Activated CD4-positive, alpha-beta memory T cell treated with anti-CD3 and anti-CD28 coated beads for 36 hours (primary cell): ENCODE measurements at regions of chr1 and their contacts with region 1.

Region 1: DNA sequence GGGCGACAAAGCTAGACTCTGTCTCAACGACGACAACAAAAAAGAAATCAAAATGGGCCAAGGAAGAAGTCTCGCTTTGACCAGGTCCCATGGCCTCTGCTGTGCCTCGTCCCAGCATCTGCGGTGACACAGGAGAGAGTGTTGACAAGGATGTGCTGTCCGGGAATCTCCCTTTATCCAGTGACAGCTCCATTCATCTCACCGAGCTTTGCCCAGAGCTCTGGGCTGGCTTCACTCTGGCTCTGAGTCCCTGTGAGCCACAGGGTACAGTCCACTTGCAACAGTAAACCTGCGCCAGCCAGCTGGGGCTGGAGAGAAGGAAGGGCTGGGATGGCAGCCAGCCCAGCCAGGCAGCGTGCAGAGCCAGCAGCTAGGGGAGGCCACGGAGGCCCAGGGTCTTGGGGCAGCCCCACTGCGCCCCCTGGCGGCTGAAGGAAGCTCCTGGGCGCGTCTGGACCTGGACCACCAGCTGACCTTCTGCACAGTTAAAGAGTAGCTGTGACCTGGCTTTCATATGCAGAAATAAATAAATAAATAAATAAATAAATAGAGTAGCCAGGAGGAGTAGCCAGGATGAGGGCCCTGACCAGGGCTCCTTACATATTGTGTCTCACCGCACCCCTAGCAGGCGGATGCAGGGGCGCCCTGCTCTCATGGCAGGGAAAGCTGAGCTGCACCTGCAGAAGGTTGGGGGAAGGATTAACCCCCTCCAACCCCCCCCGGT is 29.7 kb downstream of the ENO1 start:
- DNase-seq: peak; percentile 84
- H3K4me3 Mint-ChIP-seq: no peak overlapping the region
- H3K27ac Mint-ChIP-seq: no peak overlapping the region
- H3K4me1 Mint-ChIP-seq: no peaks in the 10 kb centered on the region
- H3K27me3 Mint-ChIP-seq: no peaks in the 10 kb centered on the region

Region 2: DNA sequence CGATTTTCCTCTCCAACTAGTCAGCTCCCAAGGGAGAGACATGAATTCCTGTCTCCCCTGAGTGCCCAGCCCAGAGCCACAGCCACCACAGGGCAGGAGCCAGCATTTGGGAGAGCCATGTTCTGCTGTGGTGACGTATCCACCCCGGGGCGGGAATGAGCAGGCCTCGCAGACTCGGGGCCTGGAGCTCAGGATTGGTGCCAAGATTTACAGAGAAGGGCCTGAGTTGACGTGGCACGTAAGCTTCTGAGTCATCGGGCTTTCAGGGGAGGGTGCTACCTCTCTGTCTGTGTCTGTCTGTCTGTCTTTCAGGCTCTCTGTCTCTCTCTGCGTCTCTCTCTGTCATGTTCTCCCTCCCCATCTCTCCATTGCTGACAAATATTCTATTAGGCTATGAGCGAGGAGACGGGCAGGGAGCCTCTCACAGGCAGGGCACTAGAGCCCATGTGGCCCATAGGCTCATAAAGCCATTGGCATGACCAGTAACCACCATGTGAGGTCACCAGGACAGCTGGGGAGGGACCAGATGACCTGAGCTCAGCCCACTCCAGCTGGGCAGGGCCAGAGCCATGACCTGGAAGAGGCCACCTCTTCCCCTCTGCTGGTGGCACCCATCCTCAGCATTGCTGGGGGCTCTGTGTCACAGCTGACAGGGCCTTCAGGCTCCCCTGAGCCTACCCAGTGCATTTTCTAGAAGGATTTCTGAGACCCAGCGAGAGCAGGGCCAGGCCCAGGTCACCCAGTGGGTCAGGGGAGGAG is 1377.8 kb before region 1 on chr1:
- CTCF ChIA-PET with region 1: no interaction called
- POLR2A ChIA-PET with region 1: no interaction called
- intact Hi-C with region 1: no loop called
- DNase-seq: peak; percentile 44
- H3K4me3 Mint-ChIP-seq: no peak overlapping the region
- H3K27ac Mint-ChIP-seq: no peak overlapping the region
- H3K4me1 Mint-ChIP-seq: no peaks in the 10 kb centered on the region
- H3K27me3 Mint-ChIP-seq: peaks cover 1% of the 10 kb centered on the region

Region 3: DNA sequence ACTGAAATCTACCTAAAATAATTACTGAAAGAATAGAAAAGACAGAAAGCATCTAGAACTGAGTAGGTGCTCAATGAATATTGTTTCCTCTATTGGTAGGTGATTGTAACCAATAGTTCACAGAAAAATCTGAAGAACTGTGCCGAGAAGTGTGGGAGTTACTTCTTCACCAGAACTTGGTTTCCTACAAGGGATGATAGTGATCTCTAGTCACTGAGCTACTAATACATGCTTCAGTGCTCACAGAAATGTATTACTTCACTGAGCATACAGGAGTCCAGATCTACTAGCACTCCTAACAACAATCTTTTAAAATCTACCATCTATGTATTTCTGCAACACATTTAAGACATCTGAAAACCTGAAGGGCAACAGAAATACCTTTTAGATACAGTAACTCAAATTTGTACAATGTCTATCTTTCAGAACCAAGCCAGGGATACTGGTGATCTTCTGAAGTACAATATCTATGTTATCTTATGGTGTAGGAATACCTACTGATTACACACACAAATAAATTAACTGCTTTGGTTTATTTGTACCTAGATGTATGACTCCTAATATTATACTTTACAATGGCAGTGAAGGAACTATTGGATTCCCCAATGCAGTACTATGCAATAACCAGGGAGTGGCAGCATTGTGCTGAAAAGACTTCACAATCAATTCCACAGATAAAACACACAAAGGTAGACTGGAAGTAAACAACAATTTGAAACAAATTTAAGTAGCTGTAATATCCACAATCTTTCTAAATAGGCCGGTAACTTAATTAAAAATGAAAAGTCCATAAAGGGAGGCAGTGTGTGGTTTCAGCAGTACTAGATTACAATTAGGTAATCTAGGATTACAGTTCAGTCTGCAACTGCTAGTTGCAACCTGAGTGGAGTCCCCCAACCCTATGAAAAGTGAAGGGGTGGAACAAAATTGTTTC is 287.9 kb before region 1 on chr1:
- CTCF ChIA-PET with region 1: interaction called, 54 read pairs
- POLR2A ChIA-PET with region 1: interaction called, 4 read pairs
- intact Hi-C with region 1: loop called (anchors 1 kb)
- DNase-seq: no peak
- H3K4me3 Mint-ChIP-seq: no peak overlapping the region
- H3K27ac Mint-ChIP-seq: peak overlapping the region; percentile 50
- H3K4me1 Mint-ChIP-seq: peaks cover 41% of the 10 kb centered on the region
- H3K27me3 Mint-ChIP-seq: no peaks in the 10 kb centered on the region

Region 4: DNA sequence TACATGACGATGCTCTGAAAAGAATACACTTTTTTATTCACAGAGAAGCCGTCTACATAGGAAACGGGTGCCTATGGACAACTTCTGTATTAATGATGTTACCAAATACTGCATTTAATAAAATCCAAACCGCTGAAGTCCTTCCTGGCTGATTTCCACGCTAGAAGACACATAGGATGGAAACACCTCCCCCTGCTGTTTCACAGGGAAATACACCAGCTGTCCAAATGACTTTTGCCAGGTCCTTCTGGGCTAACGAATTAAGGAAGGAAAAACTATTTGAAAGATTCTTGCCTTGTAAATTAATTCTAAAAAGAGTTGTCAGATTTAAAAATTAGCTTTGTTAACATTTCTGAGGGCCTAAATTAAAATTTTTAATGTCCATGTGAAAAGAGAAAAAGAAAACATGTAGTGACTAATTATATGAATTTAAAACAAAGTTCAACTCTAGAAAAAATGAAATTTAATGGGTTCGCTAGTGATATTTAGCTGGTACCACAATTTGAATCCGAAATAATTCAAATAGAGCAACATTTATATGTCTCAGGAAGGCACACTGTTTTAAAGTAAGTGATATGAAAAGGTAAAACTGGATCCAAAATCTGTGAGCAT is 177.4 kb before region 1 on chr1:
- CTCF ChIA-PET with region 1: interaction called, 40 read pairs
- POLR2A ChIA-PET with region 1: no interaction called
- intact Hi-C with region 1: no loop called
- DNase-seq: no peak
- H3K4me3 Mint-ChIP-seq: no peak overlapping the region
- H3K27ac Mint-ChIP-seq: no peak overlapping the region
- H3K4me1 Mint-ChIP-seq: peaks cover 43% of the 10 kb centered on the region
- H3K27me3 Mint-ChIP-seq: no peaks in the 10 kb centered on the region

Region 5: GRCh38 chr1:8740034-8740449 is 108.8 kb before region 1 on chr1:
- CTCF ChIA-PET with region 1: interaction called, 19 read pairs
- POLR2A ChIA-PET with region 1: no interaction called
- intact Hi-C with region 1: no loop called
- DNase-seq: no peak
- H3K4me3 Mint-ChIP-seq: no peak overlapping the region
- H3K27ac Mint-ChIP-seq: no peak overlapping the region
- H3K4me1 Mint-ChIP-seq: peaks cover 4% of the 10 kb centered on the region
- H3K27me3 Mint-ChIP-seq: no peaks in the 10 kb centered on the region

Region 6: DNA sequence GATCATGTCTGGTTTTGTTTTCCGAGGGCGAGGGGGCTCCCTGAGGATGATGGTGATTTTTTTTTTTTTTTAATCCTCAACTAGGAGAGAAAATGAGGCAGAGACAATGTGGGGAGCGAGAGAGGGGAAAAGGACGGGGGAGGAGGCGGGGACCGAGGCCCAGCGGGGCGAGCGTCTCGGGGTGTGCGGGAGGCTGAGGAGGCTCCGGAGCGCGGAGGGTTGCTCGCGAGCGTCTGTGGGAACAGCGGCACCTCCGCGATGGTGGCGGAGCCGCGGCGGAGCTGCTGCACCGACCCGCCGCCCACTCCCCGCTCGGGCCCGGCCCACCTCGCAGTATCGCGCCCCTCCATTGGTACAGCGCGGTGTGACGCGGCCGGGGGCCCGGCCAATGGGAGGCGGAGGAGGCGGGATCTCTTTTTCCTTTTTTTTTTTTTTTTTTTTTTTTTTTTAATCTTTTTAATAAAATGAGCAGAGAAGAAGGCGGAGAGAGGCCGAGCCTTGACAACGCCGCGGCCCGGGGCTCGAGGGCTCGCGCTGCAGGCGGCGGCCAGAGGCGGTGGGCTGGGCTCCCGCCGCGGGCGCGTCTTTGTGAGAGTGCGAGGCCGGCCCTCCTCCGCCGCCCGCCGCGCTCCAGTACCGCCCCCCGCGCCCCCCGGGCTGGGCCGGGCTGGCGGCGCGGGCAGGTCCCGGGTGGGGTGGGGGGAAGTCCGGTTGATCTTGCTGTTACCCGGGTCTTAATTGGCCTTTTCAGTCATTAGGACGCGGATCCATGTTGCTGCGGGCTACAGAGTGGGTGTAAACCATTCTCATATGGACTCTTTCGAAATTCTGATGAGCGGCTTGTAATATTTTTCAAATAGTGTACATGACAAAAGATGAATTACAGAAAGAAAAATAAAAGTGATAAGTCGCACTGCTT is 31.2 kb before region 1 on chr1 and contains the start of gene RERE:
- CTCF ChIA-PET with region 1: interaction called, 31 read pairs
- POLR2A ChIA-PET with region 1: interaction called, 3 read pairs
- intact Hi-C with region 1: loop called (anchors 2 kb)
- DNase-seq: peak; percentile 97
- H3K4me3 Mint-ChIP-seq: peak within 1 kb of the TSS; percentile 86
- H3K27ac Mint-ChIP-seq: peak within 1 kb of the TSS; percentile 91
- H3K4me1 Mint-ChIP-seq: peaks cover 46% of the 10 kb centered on the region
- H3K27me3 Mint-ChIP-seq: peaks cover 4% of the 10 kb centered on the region
- total RNA-seq, gene RERE: 45.0 to 50.5 TPM

Region 7: DNA sequence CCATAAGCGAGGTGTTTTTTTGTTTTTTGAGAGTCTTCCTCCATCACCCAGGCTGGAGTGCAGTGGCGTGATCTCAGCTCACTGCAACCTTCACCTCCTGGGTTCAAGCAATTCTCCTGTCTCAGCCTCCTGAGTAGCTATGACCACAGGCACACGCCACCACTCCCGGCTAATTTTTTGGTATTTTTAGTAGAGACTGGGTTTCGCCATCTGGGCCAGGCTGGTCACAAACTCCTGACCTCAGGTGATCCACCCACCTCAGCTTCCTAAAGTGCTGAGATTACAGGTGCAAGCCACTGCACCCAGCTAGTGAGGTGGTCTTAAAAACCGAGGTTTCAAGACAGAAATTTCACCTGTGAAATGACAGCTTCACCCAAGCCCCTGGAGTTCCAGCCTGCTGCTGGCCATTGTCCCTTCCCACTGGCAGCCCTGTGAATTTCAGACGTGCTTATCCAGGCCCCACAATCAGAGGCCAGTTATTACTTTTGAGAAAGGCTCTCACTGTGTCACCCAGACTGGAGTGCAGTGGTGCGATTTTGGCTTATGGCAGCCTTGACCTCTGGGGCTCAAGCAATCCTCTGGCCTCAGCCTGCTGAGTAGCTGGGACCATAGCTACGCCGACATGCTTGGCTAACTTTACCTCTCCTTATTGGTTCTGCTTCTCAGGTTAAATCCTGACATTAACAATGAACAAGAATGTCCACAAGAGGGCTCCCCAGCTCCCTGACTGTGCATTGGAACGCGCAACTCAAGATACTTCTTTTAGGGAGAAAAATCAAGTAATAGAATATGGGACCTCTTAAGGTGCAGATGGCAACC is 10.3 kb after region 1 on chr1:
- CTCF ChIA-PET with region 1: interaction called, 61 read pairs
- POLR2A ChIA-PET with region 1: interaction called, 12 read pairs
- intact Hi-C with region 1: no loop called
- DNase-seq: peak; percentile 56
- H3K4me3 Mint-ChIP-seq: no peak overlapping the region
- H3K27ac Mint-ChIP-seq: peak overlapping the region; percentile 84
- H3K4me1 Mint-ChIP-seq: peaks cover 33% of the 10 kb centered on the region
- H3K27me3 Mint-ChIP-seq: no peaks in the 10 kb centered on the region